ENCODE measurements at regions of chr7 and their contacts with region 1.

Region 1: DNA sequence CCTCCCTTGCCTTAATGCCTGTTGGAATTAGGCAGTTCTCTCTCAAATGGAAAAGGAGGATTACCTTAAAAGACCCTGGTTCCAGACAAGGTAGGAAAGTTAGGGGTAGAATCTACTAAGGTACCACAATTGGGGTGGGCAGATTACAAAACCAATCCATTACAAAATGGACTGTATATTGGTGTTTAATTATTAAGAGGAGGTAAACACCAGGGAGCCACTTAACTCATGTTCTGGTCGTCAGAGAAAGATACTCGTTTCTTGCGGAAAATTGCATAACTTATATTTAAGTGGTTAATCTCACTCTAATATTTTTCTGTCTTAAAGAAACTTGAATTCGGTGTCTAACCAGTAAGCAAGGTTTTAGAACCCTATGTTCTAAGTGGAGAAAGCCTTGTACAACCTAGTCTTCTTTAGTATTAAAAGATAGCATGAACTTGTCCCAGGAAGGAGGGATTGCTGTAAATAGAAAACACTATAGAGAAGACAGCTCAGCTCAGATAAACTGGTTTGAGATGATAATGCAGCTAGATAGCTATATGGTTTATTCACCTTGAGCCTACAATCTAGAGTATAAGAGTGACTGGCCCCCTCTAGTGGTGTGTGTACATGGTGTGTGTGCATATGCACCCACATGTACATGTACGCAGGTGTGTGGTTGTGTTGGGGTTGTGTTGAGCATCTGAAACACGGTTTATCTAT is 58.0 kb upstream of the STRIP2 start:
- DNase-seq: peak; percentile 86
- H3K4me3 Mint-ChIP-seq: no peak overlapping the region
- H3K27ac Mint-ChIP-seq: no peak overlapping the region
- H3K4me1 Mint-ChIP-seq: peaks cover 49% of the 10 kb centered on the region
- H3K27me3 Mint-ChIP-seq: no peaks in the 10 kb centered on the region

Region 2: GRCh38 chr7:129343099-129343700 is 33.0 kb before region 1 on chr7:
- CTCF ChIA-PET with region 1: interaction called, 126 read pairs
- intact Hi-C with region 1: loop called (anchors 1 kb)
- DNase-seq: peak; percentile 39
- H3K4me3 Mint-ChIP-seq: no peak overlapping the region
- H3K27ac Mint-ChIP-seq: no peak overlapping the region
- H3K4me1 Mint-ChIP-seq: peaks cover 32% of the 10 kb centered on the region
- H3K27me3 Mint-ChIP-seq: no peaks in the 10 kb centered on the region

Region 3: DNA sequence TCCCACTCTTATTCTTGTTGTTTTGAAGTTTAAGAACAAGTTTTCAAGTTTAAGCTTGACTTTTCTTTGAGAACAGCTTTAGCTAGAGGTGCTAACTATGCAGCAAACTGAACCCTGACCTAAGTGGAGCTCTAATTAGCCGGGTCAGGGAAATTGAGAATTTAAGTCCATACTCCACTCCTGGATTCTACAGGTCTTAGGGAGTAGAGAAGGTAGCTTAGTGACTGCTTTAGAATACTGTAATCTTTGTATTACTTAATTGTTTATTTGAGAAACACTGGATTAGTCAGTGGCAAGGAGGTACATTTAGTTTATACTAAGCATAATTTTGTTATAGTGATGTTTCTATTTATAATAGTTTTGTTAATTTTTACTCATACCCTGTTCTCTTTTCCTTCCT is 16.6 kb before region 1 on chr7:
- CTCF ChIA-PET with region 1: interaction called, 16 read pairs
- intact Hi-C with region 1: no loop called
- DNase-seq: no peak
- H3K4me3 Mint-ChIP-seq: no peak overlapping the region
- H3K27ac Mint-ChIP-seq: no peak overlapping the region
- H3K4me1 Mint-ChIP-seq: no peaks in the 10 kb centered on the region
- H3K27me3 Mint-ChIP-seq: no peaks in the 10 kb centered on the region

Region 4: GRCh38 chr7:129389829-129390228 is 13.6 kb after region 1 on chr7:
- CTCF ChIA-PET with region 1: interaction called, 44 read pairs
- intact Hi-C with region 1: no loop called
- DNase-seq: no peak
- H3K4me3 Mint-ChIP-seq: no peak overlapping the region
- H3K27ac Mint-ChIP-seq: no peak overlapping the region
- H3K4me1 Mint-ChIP-seq: peaks cover 6% of the 10 kb centered on the region
- H3K27me3 Mint-ChIP-seq: no peaks in the 10 kb centered on the region

Region 5: GRCh38 chr7:129394982-129395914 is 19.0 kb after region 1 on chr7:
- CTCF ChIA-PET with region 1: interaction called, 44 read pairs
- intact Hi-C with region 1: no loop called
- DNase-seq: no peak
- H3K4me3 Mint-ChIP-seq: no peak overlapping the region
- H3K27ac Mint-ChIP-seq: no peak overlapping the region
- H3K4me1 Mint-ChIP-seq: no peaks in the 10 kb centered on the region
- H3K27me3 Mint-ChIP-seq: no peaks in the 10 kb centered on the region

Region 6: DNA sequence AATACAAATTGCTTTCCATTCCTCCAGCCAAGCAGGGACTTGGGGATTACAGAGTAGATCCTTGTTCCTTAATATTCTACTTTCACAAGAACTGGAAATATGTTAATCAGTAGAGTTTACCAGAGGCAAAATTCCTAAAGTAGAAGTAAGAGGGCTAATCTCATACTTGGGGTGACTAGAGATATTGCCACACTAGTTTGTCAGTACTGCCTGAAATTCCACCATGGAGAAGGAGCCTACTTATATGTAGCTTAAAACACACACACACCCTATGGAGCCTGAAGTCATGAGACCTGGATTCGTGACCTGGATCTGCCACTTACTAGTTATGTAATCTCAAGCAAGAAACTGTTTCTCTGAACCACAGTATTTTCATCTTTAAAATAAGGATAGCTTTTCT is 91.9 kb after region 1 on chr7:
- CTCF ChIA-PET with region 1: interaction called, 21 read pairs
- intact Hi-C with region 1: no loop called
- DNase-seq: no peak
- H3K4me3 Mint-ChIP-seq: no peak overlapping the region
- H3K27ac Mint-ChIP-seq: no peak overlapping the region
- H3K4me1 Mint-ChIP-seq: peaks cover 12% of the 10 kb centered on the region
- H3K27me3 Mint-ChIP-seq: no peaks in the 10 kb centered on the region

Measured in activated naive CD4-positive, alpha-beta T cell treated with anti-CD3 and anti-CD28 coated beads for 36 hours (primary cell).